ENCODE measurements at regions of chr7 and their contacts with region 1.

Region 1: DNA sequence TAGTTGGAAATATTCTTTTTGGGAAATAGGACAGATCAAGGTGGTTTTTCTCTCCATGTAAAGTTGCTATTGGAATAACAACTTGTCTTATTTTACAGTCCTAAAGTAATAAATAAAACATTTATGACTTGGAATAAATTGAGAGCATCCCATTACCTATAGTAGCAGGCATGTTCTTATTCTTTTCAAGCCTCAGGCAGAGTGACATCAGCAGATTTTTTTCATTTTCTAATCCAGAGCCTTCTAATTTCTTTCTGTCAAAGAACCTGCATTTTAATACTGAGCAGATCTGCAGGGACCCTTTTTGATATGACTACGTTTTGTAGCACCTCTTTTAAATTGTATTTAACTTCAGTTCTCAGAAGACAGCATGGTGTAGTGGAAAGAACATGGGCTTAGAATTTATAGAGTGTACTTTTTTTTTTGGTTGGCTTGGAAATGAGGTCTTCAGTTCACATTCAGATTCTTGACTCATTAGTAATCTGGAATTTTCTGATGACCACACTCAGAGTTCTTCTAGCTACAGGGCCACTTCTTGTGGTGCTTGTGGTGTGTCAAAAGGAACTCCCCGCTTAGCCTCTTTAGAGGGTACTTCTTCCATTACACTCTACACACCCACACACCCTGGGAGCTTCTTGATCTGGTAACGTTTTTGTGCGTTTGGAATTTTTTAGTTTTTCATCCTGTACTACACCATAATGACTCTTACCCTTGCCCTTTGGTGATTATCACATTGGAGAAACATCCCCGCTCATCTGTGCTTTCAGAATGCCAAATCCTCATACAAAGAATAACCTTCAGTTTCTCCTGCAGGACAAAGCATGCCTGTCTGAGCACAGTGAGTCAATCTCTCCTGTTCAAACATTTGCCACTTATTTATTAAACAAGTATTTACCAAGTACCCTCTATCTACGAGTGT is 34.6 kb downstream of the AGK start:
- DNase-seq: peak; percentile 95
- ATAC-seq: peak; percentile 91
- H3K4me3 ChIP-seq: peak overlapping the region; percentile 19; the same call in 1 of the 2 replicates
- H3K27ac ChIP-seq: peak overlapping the region; percentile 43
- H3K4me1 ChIP-seq: peaks cover 9% of the 10 kb centered on the region
- H3K27me3 ChIP-seq: no peaks in the 10 kb centered on the region
- CTCF ChIP-seq: no peak
- POLR2A ChIP-seq: no peak
- RAD21 ChIP-seq: no peak

Region 2: GRCh38 chr7:140889645-140890044 is 696.2 kb before region 1 on chr7:
- CTCF ChIA-PET with region 1: no interaction called
- POLR2A ChIA-PET with region 1: no interaction called
- dilution Hi-C with region 1: no loop called
- in situ Hi-C with region 1: no loop called
- intact Hi-C with region 1: no loop called
- DNase-seq: no peak
- ATAC-seq: no peak
- H3K4me3 ChIP-seq: no peak overlapping the region
- H3K27ac ChIP-seq: no peak overlapping the region
- H3K4me1 ChIP-seq: peaks cover 7% of the 10 kb centered on the region
- H3K27me3 ChIP-seq: no peaks in the 10 kb centered on the region
- CTCF ChIP-seq: no peak
- POLR2A ChIP-seq: no peak
- RAD21 ChIP-seq: no peak

Region 3: GRCh38 chr7:141291541-141291940 is 294.3 kb before region 1 on chr7:
- CTCF ChIA-PET with region 1: no interaction called
- POLR2A ChIA-PET with region 1: no interaction called
- dilution Hi-C with region 1: no loop called
- in situ Hi-C with region 1: no loop called
- intact Hi-C with region 1: no loop called
- DNase-seq: no peak
- ATAC-seq: no peak
- H3K4me3 ChIP-seq: no peak overlapping the region
- H3K27ac ChIP-seq: no peak overlapping the region
- H3K4me1 ChIP-seq: no peaks in the 10 kb centered on the region
- H3K27me3 ChIP-seq: no peaks in the 10 kb centered on the region
- CTCF ChIP-seq: no peak
- POLR2A ChIP-seq: no peak
- RAD21 ChIP-seq: no peak

Region 4: GRCh38 chr7:141551094-141551781 is 34.6 kb before region 1 on chr7 and contains the start of gene AGK:
- CTCF ChIA-PET with region 1: no interaction called
- POLR2A ChIA-PET with region 1: no interaction called
- dilution Hi-C with region 1: no loop called
- in situ Hi-C with region 1: no loop called
- intact Hi-C with region 1: loop called (anchors 5 kb)
- DNase-seq: peak; percentile 75
- ATAC-seq: peak; percentile 99
- H3K4me3 ChIP-seq: peak within 1 kb of the TSS; percentile 98
- H3K27ac ChIP-seq: peak within 1 kb of the TSS; percentile 46
- H3K4me1 ChIP-seq: peaks cover 3% of the 10 kb centered on the region; the same call in 1 of the 2 replicates
- H3K27me3 ChIP-seq: no peaks in the 10 kb centered on the region
- CTCF ChIP-seq: no peak
- POLR2A ChIP-seq: peak; percentile 67
- RAD21 ChIP-seq: no peak; the same call in 1 of the 2 replicates
- total RNA-seq, gene AGK: 37.3 and 37.5 TPM in 2 replicates

Region 5: DNA sequence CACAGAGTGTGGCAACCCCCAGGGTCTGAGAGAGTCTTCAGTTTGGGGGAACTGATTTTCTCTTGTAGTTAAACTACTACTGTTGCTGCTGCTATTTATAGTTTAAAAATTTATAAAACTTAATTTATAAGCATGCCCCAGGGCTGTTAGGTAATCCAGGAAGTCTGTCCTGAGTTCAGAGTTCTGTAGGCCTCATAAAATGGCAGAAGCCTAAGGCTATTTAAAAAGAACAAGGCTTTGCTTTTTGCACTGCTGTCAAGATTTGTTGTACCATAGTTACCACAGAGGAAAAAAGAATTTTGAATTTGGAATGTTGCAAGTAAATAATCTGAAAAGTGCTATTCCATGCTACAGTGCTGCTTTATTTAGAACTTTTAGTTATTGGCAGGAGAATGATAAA is 31.4 kb after region 1 on chr7:
- CTCF ChIA-PET with region 1: no interaction called
- POLR2A ChIA-PET with region 1: no interaction called
- dilution Hi-C with region 1: no loop called
- in situ Hi-C with region 1: no loop called
- intact Hi-C with region 1: no loop called
- DNase-seq: peak; percentile 4
- ATAC-seq: no peak
- H3K4me3 ChIP-seq: no peak overlapping the region
- H3K27ac ChIP-seq: no peak overlapping the region
- H3K4me1 ChIP-seq: no peaks in the 10 kb centered on the region
- H3K27me3 ChIP-seq: no peaks in the 10 kb centered on the region
- CTCF ChIP-seq: no peak
- POLR2A ChIP-seq: no peak
- RAD21 ChIP-seq: no peak

Region 6: DNA sequence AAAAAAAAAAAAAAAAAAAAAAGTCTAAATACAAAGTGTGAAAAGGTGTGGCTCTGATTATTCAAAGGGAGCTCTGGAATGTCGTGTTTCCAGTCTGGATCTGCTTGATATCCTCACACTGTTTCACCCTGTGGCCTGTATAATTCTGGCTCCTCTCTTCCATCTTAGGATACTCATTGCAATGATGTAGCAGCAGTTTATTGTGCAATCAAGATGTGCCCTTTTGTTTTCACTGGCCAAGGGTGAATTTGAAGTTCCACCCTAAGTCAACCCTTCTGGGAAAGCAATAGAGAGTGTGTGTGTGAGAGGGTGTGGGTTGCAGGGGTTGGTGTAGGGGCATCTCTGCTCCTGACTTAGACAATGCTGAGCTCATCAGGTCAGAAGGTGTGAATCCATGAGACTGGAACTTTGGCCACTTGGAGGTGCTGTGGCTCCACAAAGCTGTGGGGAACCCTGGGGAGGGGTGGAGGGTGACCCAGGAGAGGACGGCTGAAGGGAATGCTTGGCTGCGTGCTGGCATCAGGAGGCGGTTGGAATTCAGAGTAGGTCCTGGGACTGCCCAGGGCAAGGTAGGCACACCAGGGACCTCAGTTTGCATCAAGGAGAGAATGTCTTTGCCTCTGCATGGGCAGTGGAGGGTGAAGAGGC is 789.9 kb after region 1 on chr7:
- CTCF ChIA-PET with region 1: no interaction called
- POLR2A ChIA-PET with region 1: no interaction called
- dilution Hi-C with region 1: no loop called
- in situ Hi-C with region 1: no loop called
- intact Hi-C with region 1: no loop called
- DNase-seq: peak; percentile 28
- ATAC-seq: no peak
- H3K4me3 ChIP-seq: no peak overlapping the region
- H3K27ac ChIP-seq: peak overlapping the region; percentile 13; the same call in 1 of the 2 replicates
- H3K4me1 ChIP-seq: peaks cover 15% of the 10 kb centered on the region
- H3K27me3 ChIP-seq: no peaks in the 10 kb centered on the region
- CTCF ChIP-seq: peak; percentile 47
- POLR2A ChIP-seq: no peak
- RAD21 ChIP-seq: peak; percentile 54

Measured in IMR-90 (cell line).